MCF 10A (cell line): ENCODE measurements at regions of chr5 and their contacts with region 1.

Region 1: GRCh38 chr5:134465816-134466240 is 54.1 kb upstream of the CDKN2AIPNL start:
- DNase-seq: peak; percentile 97
- H3K4me3 Mint-ChIP-seq: peak overlapping the region; percentile 72
- H3K27ac Mint-ChIP-seq: peak overlapping the region; percentile 44
- H3K4me1 Mint-ChIP-seq: peaks cover 42% of the 10 kb centered on the region
- H3K27me3 Mint-ChIP-seq: no peaks in the 10 kb centered on the region
- CTCF ChIP-seq: no peak

Region 2: DNA sequence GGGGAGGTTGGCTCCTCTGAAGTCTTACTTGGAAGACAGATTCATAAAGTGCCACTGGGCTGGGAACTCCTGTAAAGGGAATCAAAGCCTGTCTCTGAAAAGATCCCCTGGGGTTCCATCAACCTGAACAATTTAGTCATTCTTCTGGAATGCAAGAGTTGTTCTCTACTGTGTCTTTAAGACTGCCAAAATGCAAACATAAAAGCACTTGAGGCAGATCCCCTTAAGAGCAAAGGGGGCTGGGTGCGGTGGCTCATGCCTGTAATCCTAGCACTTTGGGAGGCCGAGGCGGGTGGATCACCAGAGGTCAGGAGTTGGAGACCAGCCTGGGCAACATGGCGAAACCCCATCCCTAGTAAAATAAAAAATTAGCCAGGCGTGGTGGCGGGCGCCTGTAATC is 70.9 kb before region 1 on chr5:
- CTCF ChIA-PET with region 1: interaction called, 3 read pairs
- POLR2A ChIA-PET with region 1: interaction called, 10 read pairs
- intact Hi-C with region 1: no loop called
- DNase-seq: no peak
- H3K4me3 Mint-ChIP-seq: no peak overlapping the region
- H3K27ac Mint-ChIP-seq: no peak overlapping the region
- H3K4me1 Mint-ChIP-seq: peaks cover 12% of the 10 kb centered on the region
- H3K27me3 Mint-ChIP-seq: no peaks in the 10 kb centered on the region
- CTCF ChIP-seq: no peak

Region 3: DNA sequence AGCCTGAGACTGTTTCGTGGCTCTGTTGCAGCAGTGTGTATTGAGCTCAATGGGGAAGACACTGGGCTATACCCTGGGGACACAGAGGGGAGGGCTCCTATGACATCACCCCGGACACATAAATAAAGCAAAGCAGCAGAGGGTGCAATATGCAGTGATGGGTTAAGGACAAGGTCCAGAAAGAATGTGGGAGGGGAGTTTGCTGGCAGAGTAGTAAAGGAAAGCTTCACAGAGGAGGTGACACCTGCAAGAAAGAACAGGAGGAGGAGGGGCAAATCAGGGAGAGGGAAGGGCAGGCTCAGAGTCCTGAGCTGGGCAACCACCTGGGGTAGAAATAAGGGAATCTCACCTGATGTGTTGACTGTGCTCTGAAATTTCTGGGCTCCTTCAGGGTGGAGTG is 18.9 kb before region 1 on chr5:
- CTCF ChIA-PET with region 1: interaction called, 8 read pairs
- POLR2A ChIA-PET with region 1: interaction called, 321 read pairs
- intact Hi-C with region 1: no loop called
- DNase-seq: peak; percentile 19
- H3K4me3 Mint-ChIP-seq: no peak overlapping the region
- H3K27ac Mint-ChIP-seq: no peak overlapping the region
- H3K4me1 Mint-ChIP-seq: peaks cover 37% of the 10 kb centered on the region
- H3K27me3 Mint-ChIP-seq: no peaks in the 10 kb centered on the region
- CTCF ChIP-seq: no peak

Region 4: DNA sequence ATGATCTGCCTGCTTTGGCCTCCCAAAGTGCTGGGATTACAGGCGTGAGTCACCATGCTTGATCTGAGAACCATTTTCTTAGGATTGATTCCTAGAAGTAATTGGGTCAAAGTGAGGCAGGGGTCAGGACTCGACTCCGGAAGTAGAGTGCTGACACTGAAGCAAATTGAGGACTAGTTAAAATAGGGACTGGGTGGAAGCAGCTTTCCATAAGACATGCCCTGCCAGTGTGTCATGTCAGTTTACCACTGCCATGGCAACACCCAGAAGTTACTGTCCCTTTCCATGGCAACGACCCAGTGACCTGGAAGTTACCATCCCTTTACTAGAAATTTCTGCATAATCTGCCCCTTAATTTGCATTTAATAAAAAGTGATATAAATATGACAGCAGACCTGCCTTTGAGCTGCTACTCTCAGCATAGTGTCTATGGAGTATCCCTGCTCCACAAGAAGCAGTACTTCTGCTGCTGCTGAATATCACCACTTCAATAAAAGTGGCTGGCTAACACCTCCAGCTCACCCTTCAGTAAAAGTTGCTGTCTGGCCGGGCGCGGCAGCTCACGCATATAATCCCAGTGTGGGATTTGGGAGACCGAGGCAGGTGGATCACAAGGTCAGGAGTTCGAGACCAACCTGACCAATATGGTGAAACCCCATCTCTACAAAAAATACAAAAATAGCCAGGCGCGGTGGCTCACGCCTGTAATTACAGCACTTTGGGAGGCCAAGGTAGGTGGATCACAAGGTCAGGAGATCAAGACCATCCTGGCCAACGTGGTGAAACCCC is 11.8 kb after region 1 on chr5:
- CTCF ChIA-PET with region 1: interaction called, 5 read pairs
- POLR2A ChIA-PET with region 1: interaction called, 39 read pairs
- intact Hi-C with region 1: no loop called
- DNase-seq: peak; percentile 17
- H3K4me3 Mint-ChIP-seq: no peak overlapping the region
- H3K27ac Mint-ChIP-seq: no peak overlapping the region
- H3K4me1 Mint-ChIP-seq: no peaks in the 10 kb centered on the region
- H3K27me3 Mint-ChIP-seq: no peaks in the 10 kb centered on the region
- CTCF ChIP-seq: no peak

Region 5: GRCh38 chr5:134503088-134503946 is 37.5 kb after region 1 on chr5:
- CTCF ChIA-PET with region 1: interaction called, 16 read pairs
- POLR2A ChIA-PET with region 1: interaction called, 298 read pairs
- intact Hi-C with region 1: loop called (anchors 2 kb)
- DNase-seq: peak; percentile 100
- H3K4me3 Mint-ChIP-seq: peak overlapping the region; percentile 10
- H3K27ac Mint-ChIP-seq: peak overlapping the region; percentile 90
- H3K4me1 Mint-ChIP-seq: peaks cover 45% of the 10 kb centered on the region
- H3K27me3 Mint-ChIP-seq: no peaks in the 10 kb centered on the region
- CTCF ChIP-seq: no peak

Region 6: DNA sequence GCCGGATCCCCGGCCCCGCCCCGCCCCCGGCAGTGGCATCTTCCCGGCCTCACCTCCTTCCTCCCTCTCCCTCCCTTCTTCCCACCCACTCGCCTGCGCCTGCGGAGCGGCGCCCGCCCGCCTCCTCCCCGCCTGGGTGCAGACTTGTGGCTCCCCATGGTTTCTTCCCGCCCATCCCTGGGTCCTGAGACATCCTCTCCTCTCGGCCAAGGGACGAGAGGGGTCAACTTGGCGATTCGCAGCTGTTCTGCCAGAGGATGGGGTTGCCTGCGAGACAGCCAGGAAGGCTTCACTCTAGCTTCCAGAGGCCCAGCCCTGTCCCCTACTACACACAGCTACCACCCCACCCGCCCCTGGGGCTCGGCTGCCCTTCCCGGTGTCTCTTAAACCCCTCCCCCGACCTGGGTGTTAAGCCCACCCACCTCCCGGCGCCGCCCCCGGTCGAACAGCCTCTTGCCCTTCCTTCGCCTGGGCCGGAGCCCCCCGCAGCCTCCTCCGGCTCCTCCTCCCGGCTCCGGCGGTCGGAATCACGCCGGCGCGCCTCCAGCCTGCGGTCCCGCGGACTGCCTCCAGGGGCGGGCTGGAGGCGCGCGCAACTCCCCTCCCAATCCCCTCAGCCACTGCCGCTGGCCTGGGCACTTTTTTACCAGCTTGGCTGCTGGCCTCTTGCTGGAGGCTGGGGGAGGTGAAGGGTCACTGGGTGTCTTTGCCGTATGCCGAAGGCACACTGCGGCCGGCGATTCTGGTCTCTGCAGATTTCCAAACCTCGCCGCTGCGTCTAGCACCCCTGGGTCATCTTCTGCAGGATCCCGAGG is 61.5 kb after region 1 on chr5:
- CTCF ChIA-PET with region 1: interaction called, 19 read pairs
- POLR2A ChIA-PET with region 1: interaction called, 269 read pairs
- intact Hi-C with region 1: loop called (anchors 1 kb)
- DNase-seq: peak; percentile 93
- H3K4me3 Mint-ChIP-seq: peak overlapping the region; percentile 91
- H3K27ac Mint-ChIP-seq: peak overlapping the region; percentile 49
- H3K4me1 Mint-ChIP-seq: peaks cover 50% of the 10 kb centered on the region
- H3K27me3 Mint-ChIP-seq: no peaks in the 10 kb centered on the region
- CTCF ChIP-seq: peak; percentile 94

Region 7: DNA sequence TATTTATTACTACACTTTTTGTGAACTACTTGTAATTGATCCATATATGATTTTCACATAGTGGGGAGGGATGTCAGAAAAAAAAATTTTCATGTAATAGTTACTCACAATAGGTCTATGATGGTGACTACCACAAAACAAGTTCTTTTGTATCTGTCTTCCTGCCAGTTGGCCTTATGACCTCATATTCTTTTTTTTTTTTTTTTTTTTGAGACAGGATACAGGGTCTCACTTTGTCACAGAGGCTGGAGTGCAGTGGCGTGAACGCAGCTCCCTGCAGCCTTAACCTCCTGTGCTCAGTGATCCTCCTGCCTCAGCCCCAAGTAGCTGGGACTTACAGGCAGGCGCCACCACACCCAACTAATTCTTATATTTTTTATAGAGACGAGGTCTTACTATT is 193.6 kb after region 1 on chr5:
- CTCF ChIA-PET with region 1: no interaction called
- POLR2A ChIA-PET with region 1: no interaction called
- intact Hi-C with region 1: no loop called
- DNase-seq: no peak
- H3K4me3 Mint-ChIP-seq: no peak overlapping the region
- H3K27ac Mint-ChIP-seq: no peak overlapping the region
- H3K4me1 Mint-ChIP-seq: peaks cover 6% of the 10 kb centered on the region
- H3K27me3 Mint-ChIP-seq: no peaks in the 10 kb centered on the region
- CTCF ChIP-seq: no peak